GM12878 (cell line): ENCODE measurements at regions of chr10 and their contacts with region 1.

Region 1: DNA sequence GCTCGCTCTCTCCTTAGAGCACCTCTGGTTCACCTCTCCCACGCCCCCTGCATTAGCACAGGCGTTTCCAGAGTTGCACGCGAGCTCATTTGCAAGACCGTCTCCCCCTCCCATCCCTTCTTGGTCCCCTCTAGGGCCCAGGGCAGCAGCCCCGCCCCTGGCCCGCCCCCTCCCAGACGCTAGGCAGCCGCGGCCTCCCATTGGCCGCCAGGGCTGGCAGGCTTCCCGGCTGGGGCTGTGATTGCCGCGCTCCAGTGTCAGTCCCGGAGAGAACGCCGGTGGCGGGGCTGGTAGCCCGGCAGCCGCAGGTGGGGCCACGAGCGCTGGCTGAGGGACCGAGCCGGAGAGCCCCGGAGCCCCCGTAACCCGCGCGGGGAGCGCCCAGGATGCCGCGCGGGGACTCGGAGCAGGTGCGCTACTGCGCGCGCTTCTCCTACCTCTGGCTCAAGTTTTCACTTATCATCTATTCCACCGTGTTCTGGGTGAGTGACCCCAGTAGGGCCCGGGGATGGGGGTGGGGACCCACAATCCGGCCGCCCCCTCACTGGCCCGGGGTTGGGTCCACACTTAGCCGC is at the start of gene TSPAN15:
- DNase-seq: peak; percentile 45
- ATAC-seq: peak; percentile 97
- H3K4me3 ChIP-seq: peak within 1 kb of the TSS; percentile 75
- H3K27ac ChIP-seq: no peak within 1 kb of the TSS
- H3K4me1 ChIP-seq: no peaks in the 10 kb centered on the region; the same call in 1 of the 2 replicates
- H3K27me3 ChIP-seq: no peaks in the 10 kb centered on the region; a peak in 1 of 4 replicates
- CTCF ChIP-seq: no peak
- EP300 ChIP-seq: no peak
- POLR2A ChIP-seq: no peak
- RAD21 ChIP-seq: no peak
- polyA plus RNA-seq, gene TSPAN15: not detected

Region 2: DNA sequence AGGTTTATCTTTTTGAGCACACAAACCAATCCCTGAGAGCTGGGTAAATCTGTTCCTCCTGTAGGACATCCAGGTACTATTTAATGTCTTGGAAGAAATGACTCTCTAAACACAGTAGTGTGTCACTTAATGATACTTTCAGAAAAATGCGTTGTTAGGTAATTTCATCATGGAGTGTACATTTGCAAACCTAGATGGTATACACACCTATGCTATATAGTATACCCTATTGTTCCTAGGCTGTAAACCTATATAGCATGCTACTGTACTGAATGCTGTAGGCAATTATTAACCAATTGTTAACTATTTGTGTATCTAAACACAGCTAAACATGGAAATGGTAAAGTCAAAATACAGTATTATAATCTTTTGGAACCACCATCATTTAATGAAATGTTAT is 1054.3 kb before region 1 on chr10:
- CTCF ChIA-PET with region 1: no interaction called
- POLR2A ChIA-PET with region 1: no interaction called
- RAD21 ChIA-PET with region 1: no interaction called
- SMC1A ChIA-PET with region 1: no interaction called
- in situ Hi-C with region 1: no loop called
- intact Hi-C with region 1: no loop called
- DNase-seq: no peak
- ATAC-seq: no peak
- H3K4me3 ChIP-seq: no peak overlapping the region
- H3K27ac ChIP-seq: no peak overlapping the region
- H3K4me1 ChIP-seq: no peaks in the 10 kb centered on the region
- H3K27me3 ChIP-seq: no peaks in the 10 kb centered on the region
- CTCF ChIP-seq: no peak
- EP300 ChIP-seq: no peak
- POLR2A ChIP-seq: no peak
- RAD21 ChIP-seq: no peak

Region 3: DNA sequence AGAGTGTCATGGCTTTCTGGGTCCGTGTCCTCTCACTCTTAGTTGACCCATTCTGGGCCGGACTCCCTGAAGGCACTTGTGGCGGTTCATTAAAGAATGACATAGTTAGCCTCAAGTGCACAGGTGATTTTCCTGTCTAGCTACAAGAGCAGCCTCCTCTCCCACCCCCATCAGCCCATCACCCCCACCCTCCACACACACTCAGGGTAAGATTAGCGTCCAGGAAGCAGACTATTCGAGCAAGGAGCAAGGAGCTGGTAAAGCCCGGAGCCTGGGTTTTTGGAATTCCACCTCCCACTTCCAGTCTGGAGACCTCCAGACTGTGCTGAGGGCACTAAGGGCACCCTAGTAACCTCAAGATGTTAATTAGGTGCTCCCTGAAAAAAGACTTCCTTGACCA is 74.1 kb before region 1 on chr10:
- CTCF ChIA-PET with region 1: no interaction called
- POLR2A ChIA-PET with region 1: interaction called, 10 read pairs
- RAD21 ChIA-PET with region 1: no interaction called
- SMC1A ChIA-PET with region 1: no interaction called
- in situ Hi-C with region 1: no loop called
- intact Hi-C with region 1: no loop called
- DNase-seq: no peak
- ATAC-seq: no peak
- H3K4me3 ChIP-seq: no peak overlapping the region
- H3K27ac ChIP-seq: no peak overlapping the region
- H3K4me1 ChIP-seq: peaks cover 3% of the 10 kb centered on the region; the same call in 1 of the 2 replicates
- H3K27me3 ChIP-seq: no peaks in the 10 kb centered on the region
- CTCF ChIP-seq: no peak
- EP300 ChIP-seq: no peak
- POLR2A ChIP-seq: no peak
- RAD21 ChIP-seq: no peak

Region 4: DNA sequence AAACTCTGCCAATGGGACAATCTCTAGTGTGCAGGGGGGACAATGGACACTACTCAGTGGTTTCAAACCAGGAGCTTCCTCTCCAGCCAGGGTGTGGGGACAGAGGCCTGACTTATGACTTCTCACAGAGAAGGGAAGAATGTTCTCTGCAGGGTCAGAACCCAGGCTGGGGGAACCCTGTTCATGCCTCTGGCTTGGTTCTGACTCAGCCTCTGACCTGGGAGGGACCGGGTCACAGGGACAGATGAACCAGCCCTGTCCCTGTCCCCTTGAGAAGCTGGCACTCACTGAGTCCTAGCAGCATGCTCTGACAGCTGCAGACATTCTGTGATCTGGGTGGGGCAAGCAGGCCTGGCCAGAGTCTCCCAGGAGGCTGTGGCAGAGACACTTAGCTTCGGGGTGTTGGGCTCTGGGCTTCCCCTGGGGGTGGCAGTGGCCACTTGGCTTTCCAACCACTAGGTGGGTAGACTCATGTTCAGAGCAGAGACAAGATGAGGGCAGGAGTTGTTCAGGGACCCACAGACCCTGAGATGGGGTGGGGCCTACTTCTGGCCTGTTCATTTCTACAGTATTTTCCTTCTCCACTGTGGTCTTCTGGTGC is 13.6 kb after region 1 on chr10:
- CTCF ChIA-PET with region 1: interaction called, 16 read pairs
- POLR2A ChIA-PET with region 1: interaction called, 8 read pairs
- RAD21 ChIA-PET with region 1: interaction called, 16 read pairs
- SMC1A ChIA-PET with region 1: interaction called, 14 read pairs
- in situ Hi-C with region 1: no loop called
- intact Hi-C with region 1: no loop called
- DNase-seq: no peak
- ATAC-seq: peak; percentile 86
- H3K4me3 ChIP-seq: no peak overlapping the region
- H3K27ac ChIP-seq: peak overlapping the region; percentile 17
- H3K4me1 ChIP-seq: peaks cover 35% of the 10 kb centered on the region
- H3K27me3 ChIP-seq: no peaks in the 10 kb centered on the region
- CTCF ChIP-seq: no peak
- EP300 ChIP-seq: no peak
- POLR2A ChIP-seq: no peak
- RAD21 ChIP-seq: no peak